Caco-2 (cell line): ENCODE measurements at regions of chr15 and their contacts with region 1.

Region 1: GRCh38 chr15:76905013-76905839 is at the start of gene SCAPER:
- DNase-seq: peak; percentile 92 to 94
- H3K4me3 ChIP-seq: peak within 1 kb of the TSS; percentile 81
- H3K4me3 Mint-ChIP-seq: peak within 1 kb of the TSS; percentile 86
- H3K27ac Mint-ChIP-seq: peak within 1 kb of the TSS; percentile 94
- H3K4me1 ChIP-seq: peaks cover 31% of the 10 kb centered on the region
- H3K4me1 Mint-ChIP-seq: peaks cover 22% of the 10 kb centered on the region
- H3K27me3 ChIP-seq: no peaks in the 10 kb centered on the region
- H3K27me3 Mint-ChIP-seq: no peaks in the 10 kb centered on the region
- CTCF ChIP-seq: no peak
- total RNA-seq, gene SCAPER: 24.6 and 28.3 TPM in 2 replicates

Region 2: DNA sequence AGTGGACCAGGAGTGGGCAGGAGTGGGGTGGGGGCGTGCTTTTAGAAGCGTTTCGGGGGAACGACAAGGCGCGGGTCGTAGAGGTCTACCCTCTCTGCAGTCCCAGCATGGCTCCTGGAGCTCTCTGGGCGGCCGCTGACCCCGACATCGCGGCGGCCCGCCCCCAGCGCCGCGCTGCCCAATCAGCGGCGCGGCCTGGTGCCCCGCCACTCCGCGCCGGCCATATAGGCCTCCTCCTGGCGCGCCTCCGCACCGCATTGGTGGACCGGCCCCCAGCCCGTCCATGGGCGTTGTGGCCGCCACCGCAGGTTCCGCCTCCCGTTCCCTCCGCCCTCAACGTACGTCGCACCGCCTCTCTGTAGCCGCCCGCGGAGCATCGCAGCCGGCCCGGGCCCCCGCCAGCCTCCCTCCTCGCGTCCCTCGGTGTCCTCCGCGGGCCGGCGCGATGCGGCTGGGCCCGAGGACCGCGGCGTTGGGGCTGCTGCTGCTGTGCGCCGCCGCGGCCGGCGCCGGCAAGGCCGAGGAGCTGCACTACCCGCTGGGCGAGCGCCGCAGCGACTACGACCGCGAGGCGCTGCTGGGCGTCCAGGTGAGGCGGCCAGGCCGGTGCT is 26.3 kb after region 1 on chr15 and contains the start of gene RCN2:
- CTCF ChIA-PET with region 1: interaction called, 3 read pairs
- POLR2A ChIA-PET with region 1: interaction called, 18 read pairs
- intact Hi-C with region 1: loop called (anchors 1 kb)
- DNase-seq: peak; percentile 93 to 96
- H3K4me3 ChIP-seq: peak within 1 kb of the TSS; percentile 55
- H3K4me3 Mint-ChIP-seq: peak within 1 kb of the TSS; percentile 87
- H3K27ac Mint-ChIP-seq: peak within 1 kb of the TSS; percentile 81
- H3K4me1 ChIP-seq: peaks cover 5% of the 10 kb centered on the region; the same call in 1 of the 2 replicates
- H3K4me1 Mint-ChIP-seq: peaks cover 6% of the 10 kb centered on the region
- H3K27me3 ChIP-seq: no peaks in the 10 kb centered on the region
- H3K27me3 Mint-ChIP-seq: no peaks in the 10 kb centered on the region
- CTCF ChIP-seq: no peak
- total RNA-seq, gene RCN2: 72.8 and 73.7 TPM in 2 replicates